ENCODE measurements at regions of chrX and their contacts with region 1.

Region 1: DNA sequence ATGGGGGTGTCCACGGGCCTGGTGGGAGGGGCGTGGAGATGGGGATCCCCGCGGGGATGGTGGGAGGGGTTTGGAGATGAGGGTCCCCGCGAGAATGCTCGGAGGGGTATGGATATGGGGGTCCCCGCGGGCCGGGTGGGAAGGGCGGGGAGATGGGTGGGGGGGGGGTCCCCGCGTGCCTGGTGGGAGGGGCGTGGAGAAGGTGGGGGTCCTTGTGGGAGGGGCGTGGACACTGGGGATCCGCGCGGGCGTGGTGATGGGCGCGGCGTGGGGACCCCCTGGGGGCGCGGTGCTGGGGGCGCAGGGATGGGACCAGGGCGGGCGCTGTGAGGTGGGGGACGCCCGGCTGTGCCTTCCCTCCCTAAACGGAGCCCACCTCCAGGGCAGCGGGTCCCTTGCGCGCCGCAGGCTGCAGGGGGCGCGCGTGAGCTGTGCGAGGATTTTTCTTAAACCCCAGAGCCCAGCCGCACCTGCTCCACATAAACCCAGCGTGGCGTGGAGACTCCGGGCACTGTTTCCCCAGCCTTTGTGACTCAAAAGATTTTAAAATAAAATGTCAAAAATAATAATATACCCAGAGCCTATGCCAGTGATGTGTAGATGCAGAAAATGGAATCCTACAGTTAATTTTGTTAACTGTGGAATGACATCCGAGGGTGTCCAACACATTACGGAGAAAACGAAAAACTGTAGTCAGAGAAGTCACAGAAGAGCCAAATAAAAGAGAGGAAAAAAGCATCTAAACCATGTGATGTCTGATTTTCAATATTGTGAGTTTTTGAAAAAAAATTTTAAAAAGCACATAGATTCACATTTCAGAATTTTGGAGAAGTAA is 1.5 kb upstream of the ASMTL start:
- DNase-seq: peak; percentile 92
- ATAC-seq: peak; percentile 29
- H3K4me3 Mint-ChIP-seq: peak overlapping the region; percentile 63
- H3K27ac Mint-ChIP-seq: peak overlapping the region; percentile 50
- H3K4me1 Mint-ChIP-seq: peaks cover 32% of the 10 kb centered on the region
- H3K27me3 Mint-ChIP-seq: no peaks in the 10 kb centered on the region
- CTCF ChIP-seq: peak; percentile 37

Region 2: GRCh38 chrX:1468250-1468772 is 14.1 kb after region 1 on chrX:
- CTCF ChIA-PET with region 1: no interaction called
- POLR2A ChIA-PET with region 1: no interaction called
- intact Hi-C with region 1: loop called (anchors 1 kb)
- DNase-seq: peak; percentile 71
- ATAC-seq: peak; percentile 78
- H3K4me3 Mint-ChIP-seq: peak overlapping the region; percentile 73
- H3K27ac Mint-ChIP-seq: peak overlapping the region; percentile 96
- H3K4me1 Mint-ChIP-seq: peaks cover 88% of the 10 kb centered on the region
- H3K27me3 Mint-ChIP-seq: no peaks in the 10 kb centered on the region
- CTCF ChIP-seq: no peak

Region 3: DNA sequence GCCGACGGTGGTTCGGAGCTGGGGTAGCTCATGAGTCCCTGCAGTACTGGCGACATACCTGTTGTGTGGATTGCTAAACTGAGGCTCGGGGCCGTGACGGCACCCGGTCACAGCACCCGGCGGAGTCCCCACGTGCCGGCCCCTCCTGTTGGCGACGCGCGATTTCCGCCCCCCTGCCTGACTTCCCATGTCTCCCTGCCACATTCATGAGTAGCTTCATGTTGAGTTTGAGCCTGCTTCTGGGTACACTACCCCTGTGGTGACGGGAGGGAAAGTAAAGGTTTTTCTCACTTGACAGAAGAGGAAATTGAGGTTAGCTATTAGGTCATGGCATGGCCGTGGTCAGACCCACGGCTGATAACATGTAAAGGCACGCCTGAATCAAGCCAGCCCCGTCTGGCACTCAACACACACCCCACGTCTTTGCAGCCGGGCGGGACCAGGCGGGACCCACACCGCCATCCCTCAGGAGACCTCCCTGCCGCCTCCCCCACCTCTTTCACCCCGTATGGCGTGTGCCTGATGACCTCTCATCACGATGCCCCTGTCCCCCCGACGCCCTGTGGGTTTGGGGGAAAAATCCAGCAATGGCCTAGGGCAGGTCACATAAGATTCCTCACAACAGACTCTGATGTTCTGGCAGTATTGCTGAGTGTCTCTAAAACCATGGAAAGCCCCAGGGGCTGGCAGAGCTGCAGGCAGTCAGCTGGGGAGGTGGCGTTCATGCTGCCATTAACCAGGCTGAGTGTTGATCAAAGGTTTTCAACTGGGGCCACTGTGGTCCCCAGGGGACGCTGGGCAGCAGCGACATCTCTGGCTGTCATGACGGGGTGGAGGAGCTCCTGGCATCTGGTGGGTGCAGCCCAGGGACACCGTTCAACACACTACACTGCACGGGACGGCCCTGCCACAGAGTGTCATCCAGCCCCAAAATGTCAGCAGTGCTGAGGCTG is 53.6 kb after region 1 on chrX:
- CTCF ChIA-PET with region 1: no interaction called
- POLR2A ChIA-PET with region 1: no interaction called
- intact Hi-C with region 1: loop called (anchors 1 kb)
- DNase-seq: peak; percentile 66
- ATAC-seq: peak; percentile 77
- H3K4me3 Mint-ChIP-seq: no peak overlapping the region
- H3K27ac Mint-ChIP-seq: no peak overlapping the region
- H3K4me1 Mint-ChIP-seq: peaks cover 15% of the 10 kb centered on the region
- H3K27me3 Mint-ChIP-seq: no peaks in the 10 kb centered on the region
- CTCF ChIP-seq: no peak

Region 4: DNA sequence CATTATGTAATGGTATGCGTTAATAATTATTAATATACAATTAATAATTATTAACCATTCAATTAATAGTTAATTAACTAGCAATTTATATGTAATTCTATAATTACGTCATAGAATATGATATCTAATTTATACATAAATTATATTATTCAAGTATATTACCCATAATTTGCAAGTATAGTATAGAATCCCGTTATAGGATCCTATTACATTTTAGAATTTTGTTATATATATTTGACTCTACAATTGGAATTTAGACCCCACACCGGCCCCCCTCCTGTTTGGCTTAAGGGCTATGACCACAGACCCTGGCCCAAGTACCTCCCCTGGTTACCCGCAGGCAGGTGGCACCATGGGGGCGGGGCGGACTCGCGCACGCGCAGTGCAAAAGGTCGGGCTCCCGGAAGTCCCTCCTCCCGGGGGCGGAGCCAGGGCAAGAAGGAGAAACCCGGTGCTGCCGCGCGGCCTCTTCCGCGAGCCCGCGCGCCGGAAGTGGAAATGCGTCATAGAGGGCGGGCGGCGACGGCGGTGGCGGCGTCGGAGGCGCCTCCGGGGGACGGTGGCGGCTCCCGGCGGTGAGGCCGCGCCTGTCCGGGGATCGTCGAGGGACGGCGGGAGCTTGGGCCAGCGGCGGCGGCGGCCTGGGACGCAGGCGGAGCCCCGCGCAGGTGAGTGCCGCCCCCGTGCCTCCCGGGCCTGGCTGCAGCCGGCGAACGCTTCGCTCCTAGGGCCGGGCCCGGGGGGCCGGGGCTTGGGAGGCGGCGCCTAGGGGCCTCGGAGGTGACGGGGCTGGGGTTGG is 137.1 kb after region 1 on chrX and contains the start of gene AKAP17A:
- CTCF ChIA-PET with region 1: no interaction called
- POLR2A ChIA-PET with region 1: no interaction called
- intact Hi-C with region 1: loop called (anchors 1 kb)
- DNase-seq: peak; percentile 100
- ATAC-seq: peak; percentile 84
- H3K4me3 Mint-ChIP-seq: peak within 1 kb of the TSS; percentile 91
- H3K27ac Mint-ChIP-seq: peak within 1 kb of the TSS; percentile 83
- H3K4me1 Mint-ChIP-seq: peaks cover 51% of the 10 kb centered on the region
- H3K27me3 Mint-ChIP-seq: no peaks in the 10 kb centered on the region
- CTCF ChIP-seq: no peak
- total RNA-seq, gene AKAP17A: 75.7 and 84.7 TPM in 2 replicates

Region 5: DNA sequence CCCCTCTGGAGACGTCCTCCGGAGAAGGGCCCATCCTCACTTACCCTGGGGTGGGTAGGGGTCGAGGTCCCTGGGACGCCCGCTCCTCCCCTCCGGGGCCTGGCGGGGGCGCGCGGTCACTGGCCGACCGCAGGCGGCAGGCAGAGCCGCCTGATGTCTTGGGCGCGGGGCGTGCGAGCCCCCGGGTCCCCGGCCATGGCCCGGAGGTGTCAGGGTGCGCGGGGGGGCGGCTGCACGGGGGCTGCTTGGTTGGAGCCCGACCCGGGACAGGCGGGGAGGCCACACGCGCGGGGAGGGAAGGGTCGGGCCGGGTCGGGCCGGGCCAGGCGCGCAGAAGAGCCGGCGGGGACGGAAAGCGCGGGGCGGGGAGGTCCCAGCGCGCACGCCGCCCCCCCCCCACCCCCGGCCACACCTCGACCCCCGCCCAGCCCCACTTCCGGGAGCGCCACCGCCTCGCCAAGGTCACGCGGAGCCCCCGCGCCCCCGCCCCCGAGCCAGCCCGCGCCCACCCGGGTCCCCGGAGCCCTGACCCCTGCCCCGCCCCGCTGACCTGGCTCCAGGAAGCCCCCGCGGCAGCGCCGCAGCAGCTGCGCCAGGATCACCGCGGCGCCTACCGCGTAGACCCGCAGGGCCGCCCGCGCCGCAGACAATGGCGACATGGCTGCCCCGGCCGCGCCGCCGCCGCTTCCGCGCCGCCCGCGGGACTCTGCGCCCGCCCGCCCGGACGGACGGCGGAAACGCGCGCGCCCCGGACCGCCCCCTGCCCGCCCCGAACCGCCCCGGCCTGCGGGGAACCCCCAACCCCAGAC is 1046.3 kb after region 1 on chrX and contains the starts of genes DHRSX and ZBED1:
- CTCF ChIA-PET with region 1: no interaction called
- POLR2A ChIA-PET with region 1: no interaction called
- intact Hi-C with region 1: loop called (anchors 5 kb)
- DNase-seq: peak; percentile 63
- ATAC-seq: peak; percentile 77
- H3K4me3 Mint-ChIP-seq: peak within 1 kb of the TSS; percentile 82
- H3K27ac Mint-ChIP-seq: peak within 1 kb of the TSS; percentile 74
- H3K4me1 Mint-ChIP-seq: peaks cover 33% of the 10 kb centered on the region
- H3K27me3 Mint-ChIP-seq: no peaks in the 10 kb centered on the region
- CTCF ChIP-seq: no peak
- total RNA-seq, gene DHRSX: 23.2 and 28.3 TPM in 2 replicates
- total RNA-seq, gene ZBED1: 49.5 and 50.1 TPM in 2 replicates

Region 6: GRCh38 chrX:2627272-2627867 is 1173.2 kb after region 1 on chrX:
- CTCF ChIA-PET with region 1: no interaction called
- POLR2A ChIA-PET with region 1: no interaction called
- intact Hi-C with region 1: loop called (anchors 1 kb)
- DNase-seq: no peak
- ATAC-seq: peak; percentile 33
- H3K4me3 Mint-ChIP-seq: no peak overlapping the region
- H3K27ac Mint-ChIP-seq: peak overlapping the region; percentile 30
- H3K4me1 Mint-ChIP-seq: peaks cover 43% of the 10 kb centered on the region
- H3K27me3 Mint-ChIP-seq: no peaks in the 10 kb centered on the region
- CTCF ChIP-seq: no peak

Measured in activated B cell treated with CpG ODN at 0.5 μM for 24 hours (primary cell).